Prostate gland (tissue), 2 donors: ENCODE measurements at regions of chr11 and their contacts with region 1.

Region 1: DNA sequence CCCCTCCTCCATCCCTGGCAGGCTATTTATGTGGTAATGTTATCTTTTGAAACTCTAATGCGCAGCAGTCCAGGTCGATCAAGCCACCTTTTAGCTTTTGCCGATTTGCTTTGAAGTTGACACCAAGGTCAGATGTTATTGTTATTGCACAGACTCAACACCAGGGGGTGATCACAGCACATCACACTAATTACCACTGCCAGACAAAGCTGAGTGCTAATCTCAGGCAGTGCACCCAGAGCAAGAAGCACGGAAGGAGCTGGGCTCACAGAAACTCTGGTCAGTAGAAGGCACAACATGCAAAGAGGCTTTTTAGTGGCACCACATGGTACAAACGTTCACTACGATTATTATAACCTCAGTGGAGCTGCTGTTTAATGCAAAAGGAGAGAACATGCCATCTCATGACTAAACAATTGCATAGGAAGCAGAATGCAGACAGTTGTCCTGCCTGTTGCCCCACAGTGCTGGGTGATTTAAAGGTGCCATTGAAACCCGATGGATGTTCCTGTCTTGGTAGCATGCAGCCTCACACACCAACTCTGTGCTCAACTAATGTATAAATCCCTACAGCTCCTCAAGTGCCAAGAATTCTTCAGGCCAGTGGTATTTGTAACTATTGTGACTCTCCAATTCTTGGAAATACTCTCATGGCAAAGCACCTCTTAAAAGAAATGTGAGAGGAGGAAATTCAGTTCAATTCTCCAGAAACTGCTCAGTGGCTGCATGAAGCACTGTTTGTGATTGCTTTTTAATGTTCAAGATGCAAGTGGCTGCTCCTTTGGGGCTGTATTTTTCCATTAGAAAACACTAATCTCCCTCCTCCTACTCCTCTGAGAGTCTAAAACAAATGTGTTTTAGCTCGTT is 353.9 kb upstream of the DDI1 start:
- DNase-seq: peak; percentile 44
- H3K4me3 ChIP-seq: no peak overlapping the region
- H3K27ac ChIP-seq: no peak overlapping the region
- H3K4me1 ChIP-seq: no peaks in the 10 kb centered on the region
- H3K27me3 ChIP-seq: no peaks in the 10 kb centered on the region
- CTCF ChIP-seq: peak; percentile 33 to 80 (median 78)
- POLR2A ChIP-seq: no peak

Region 2: GRCh38 chr11:103844327-103845215 is 162.0 kb after region 1 on chr11:
- intact Hi-C with region 1: loop called (anchors 10 kb)
- DNase-seq: no peak
- H3K4me3 ChIP-seq: no peak overlapping the region
- H3K27ac ChIP-seq: no peak overlapping the region
- H3K4me1 ChIP-seq: no peaks in the 10 kb centered on the region
- H3K27me3 ChIP-seq: no peaks in the 10 kb centered on the region
- CTCF ChIP-seq: no peak
- POLR2A ChIP-seq: no peak

Region 3: GRCh38 chr11:103927535-103927934 is 245.0 kb after region 1 on chr11:
- intact Hi-C with region 1: loop called (anchors 10 kb)
- DNase-seq: no peak
- H3K4me3 ChIP-seq: no peak overlapping the region
- H3K27ac ChIP-seq: no peak overlapping the region
- H3K4me1 ChIP-seq: no peaks in the 10 kb centered on the region
- H3K27me3 ChIP-seq: no peaks in the 10 kb centered on the region
- CTCF ChIP-seq: peak in 1 of 4 experiments; percentile 39
- POLR2A ChIP-seq: no peak

Region 4: GRCh38 chr11:104151404-104152204 is 469.1 kb after region 1 on chr11:
- intact Hi-C with region 1: loop called (anchors 5 kb)
- DNase-seq: no peak
- H3K4me3 ChIP-seq: no peak overlapping the region
- H3K27ac ChIP-seq: no peak overlapping the region
- H3K4me1 ChIP-seq: no peaks in the 10 kb centered on the region
- H3K27me3 ChIP-seq: no peaks in the 10 kb centered on the region
- CTCF ChIP-seq: peak in 2 of 4 experiments; percentile 19 to 22
- POLR2A ChIP-seq: no peak